Activated B cell treated with CpG ODN at 0.5 μM for 24 hours (primary cell): ENCODE measurements at regions of chr7 and their contacts with region 1.

Region 1: GRCh38 chr7:87933945-87934698 is at the start of gene ADAM22:
- DNase-seq: peak; percentile 68
- ATAC-seq: peak; percentile 97
- H3K4me3 Mint-ChIP-seq: peak within 1 kb of the TSS; percentile 89
- H3K27ac Mint-ChIP-seq: peak within 1 kb of the TSS; percentile 32
- H3K4me1 Mint-ChIP-seq: peaks cover 14% of the 10 kb centered on the region
- H3K27me3 Mint-ChIP-seq: peaks cover 11% of the 10 kb centered on the region
- CTCF ChIP-seq: no peak
- total RNA-seq, gene ADAM22: 0.71 and 0.88 TPM in 2 replicates

Region 2: DNA sequence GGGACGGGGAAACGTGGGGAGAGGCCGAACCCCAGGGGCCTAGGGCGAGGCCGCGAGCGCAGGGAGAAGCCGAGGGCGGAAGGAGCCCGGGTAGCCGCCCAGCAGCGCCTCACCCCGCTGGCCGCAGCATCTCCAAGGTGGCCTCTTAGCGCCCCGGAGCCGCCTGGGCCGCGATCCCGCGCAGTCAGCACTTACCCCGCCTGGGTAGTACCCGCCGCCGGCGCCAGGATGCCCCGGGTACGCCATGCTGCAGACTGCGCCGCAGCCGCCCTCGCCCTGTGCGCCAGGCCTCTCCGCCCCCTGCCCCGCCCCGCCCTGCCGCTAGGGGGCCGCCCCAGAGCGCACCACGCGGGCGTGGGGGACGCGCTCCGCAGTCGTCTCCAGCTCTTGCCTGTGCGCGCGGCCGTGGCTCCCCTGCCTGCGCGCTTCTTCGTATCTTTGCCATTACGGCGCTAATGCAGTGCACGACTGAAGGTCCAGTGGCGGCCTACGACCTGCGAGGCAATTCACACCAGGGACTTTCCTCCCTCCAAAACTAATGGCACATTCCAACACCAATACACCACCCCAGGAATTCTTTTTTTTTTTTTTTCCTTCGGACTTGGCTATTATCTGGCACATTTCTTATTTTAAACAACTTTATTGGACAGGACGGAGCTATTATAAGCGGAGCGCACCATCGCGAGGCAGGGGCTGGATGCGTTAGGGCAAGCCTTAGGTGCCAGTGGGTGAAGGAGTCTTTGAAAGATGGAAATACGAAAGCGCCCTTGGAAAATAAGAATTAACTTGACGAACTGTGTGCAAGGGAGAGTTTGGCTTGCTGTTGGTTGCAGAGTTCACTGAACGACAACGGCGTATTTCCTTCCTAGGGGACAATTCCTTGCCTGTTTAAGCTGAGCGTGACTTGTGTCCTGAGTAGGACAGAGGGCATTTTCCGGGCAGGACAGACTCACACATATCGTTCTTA is 285.9 kb after region 1 on chr7 and contains the start of gene SRI:
- CTCF ChIA-PET with region 1: no interaction called
- POLR2A ChIA-PET with region 1: no interaction called
- intact Hi-C with region 1: loop called (anchors 1 kb)
- DNase-seq: peak; percentile 94
- ATAC-seq: peak; percentile 96
- H3K4me3 Mint-ChIP-seq: peak within 1 kb of the TSS; percentile 95
- H3K27ac Mint-ChIP-seq: peak within 1 kb of the TSS; percentile 92
- H3K4me1 Mint-ChIP-seq: peaks cover 25% of the 10 kb centered on the region
- H3K27me3 Mint-ChIP-seq: no peaks in the 10 kb centered on the region
- CTCF ChIP-seq: peak; percentile 73
- total RNA-seq, gene SRI: 97.4 and 101 TPM in 2 replicates